MCF 10A (cell line): ENCODE measurements at regions of chr11 and their contacts with region 1.

Region 1: DNA sequence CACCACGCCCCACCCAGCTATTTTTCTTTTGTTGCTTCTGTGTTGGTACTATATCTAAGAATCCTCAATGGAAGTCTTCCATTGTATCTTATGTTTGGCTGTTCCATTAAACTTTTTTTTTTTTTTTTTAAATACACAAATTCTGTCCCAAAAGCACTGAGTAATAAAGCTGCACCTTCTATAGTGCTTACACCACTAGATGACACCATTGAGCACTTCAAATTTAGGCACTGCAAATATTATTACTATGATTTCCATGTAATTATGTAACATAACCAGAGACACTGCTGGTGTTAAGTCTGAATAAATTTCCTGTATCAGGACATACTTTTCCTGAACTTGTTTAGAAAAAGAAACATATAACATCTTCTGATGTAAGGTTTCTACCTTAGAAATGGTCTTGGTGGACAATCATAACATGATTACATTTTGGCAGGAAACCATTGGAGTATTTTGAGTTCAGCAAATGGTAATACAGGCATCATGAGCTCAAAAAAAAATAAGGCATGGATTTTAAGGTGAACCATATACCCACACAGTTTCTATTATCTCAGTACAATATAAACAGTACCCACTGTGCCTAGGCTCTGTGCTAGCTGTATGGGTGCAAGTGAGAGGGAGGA is 110.5 kb downstream of the ATG16L2 start:
- DNase-seq: peak; percentile 44
- H3K4me3 Mint-ChIP-seq: no peak overlapping the region
- H3K27ac Mint-ChIP-seq: no peak overlapping the region
- H3K4me1 Mint-ChIP-seq: no peaks in the 10 kb centered on the region
- H3K27me3 Mint-ChIP-seq: no peaks in the 10 kb centered on the region
- CTCF ChIP-seq: peak; percentile 55

Region 2: DNA sequence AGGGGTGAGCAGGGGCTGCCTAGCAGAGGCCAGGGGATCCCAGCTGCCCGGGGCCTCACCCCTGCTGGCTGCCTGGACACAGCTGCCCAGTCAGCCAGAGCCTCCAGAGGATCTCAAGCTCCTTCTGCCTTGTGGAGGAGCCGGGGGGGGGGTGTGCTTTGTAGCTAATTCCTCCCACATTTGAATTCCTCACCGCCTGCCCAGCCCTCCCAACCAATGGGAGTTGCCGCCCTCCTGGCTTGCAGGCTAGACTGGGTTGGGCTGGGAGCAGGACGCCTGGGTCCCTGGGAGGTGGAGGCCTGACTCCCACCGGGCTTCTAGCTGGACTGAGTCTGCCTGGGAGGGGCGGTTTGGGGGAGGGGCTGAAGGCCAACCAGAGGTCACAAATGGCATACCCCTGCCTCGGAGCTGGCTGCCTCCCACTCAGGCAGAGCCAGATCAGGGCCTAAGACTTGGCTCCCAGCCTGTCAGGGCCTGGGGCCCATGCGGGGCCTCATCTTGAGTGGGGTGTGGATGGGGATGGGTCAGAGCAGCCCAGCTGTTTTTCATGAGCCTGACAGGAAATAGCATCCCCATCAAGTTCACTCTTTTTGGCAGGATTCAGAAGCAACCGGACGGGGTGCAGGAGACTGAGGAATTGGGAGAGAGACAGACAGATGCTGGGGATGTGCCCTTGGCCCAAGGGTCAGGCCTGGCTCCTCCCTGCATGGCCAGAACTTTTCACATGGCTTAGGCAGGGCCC is 221.2 kb before region 1 on chr11:
- CTCF ChIA-PET with region 1: no interaction called
- POLR2A ChIA-PET with region 1: no interaction called
- intact Hi-C with region 1: no loop called
- DNase-seq: no peak
- H3K4me3 Mint-ChIP-seq: no peak overlapping the region
- H3K27ac Mint-ChIP-seq: no peak overlapping the region
- H3K4me1 Mint-ChIP-seq: no peaks in the 10 kb centered on the region
- H3K27me3 Mint-ChIP-seq: no peaks in the 10 kb centered on the region
- CTCF ChIP-seq: no peak

Region 3: DNA sequence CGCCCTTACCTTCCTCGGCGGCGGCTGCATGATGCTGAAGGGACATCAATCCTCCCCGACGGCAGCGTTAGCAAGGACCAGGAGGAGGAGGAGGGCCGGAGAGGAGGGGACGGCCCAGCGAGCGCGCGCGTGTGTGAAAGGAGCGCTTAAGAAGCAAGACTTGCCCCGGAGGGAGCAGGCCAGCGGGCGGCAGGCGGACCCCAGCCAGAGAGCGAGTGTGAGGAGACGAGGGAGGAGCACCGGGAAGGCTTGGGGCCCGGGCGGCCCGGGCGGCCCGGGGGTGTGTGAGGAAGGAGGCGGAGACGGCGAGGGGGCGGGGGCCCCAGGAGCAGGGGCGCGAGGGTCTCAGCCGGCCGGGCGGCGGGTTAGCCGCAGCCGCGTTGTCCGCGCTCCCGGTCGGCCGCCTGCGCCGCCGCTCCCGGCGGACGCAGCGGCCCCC is 217.2 kb after region 1 on chr11:
- CTCF ChIA-PET with region 1: interaction called, 3 read pairs
- POLR2A ChIA-PET with region 1: interaction called, 5 read pairs
- intact Hi-C with region 1: loop called (anchors 1 kb)
- DNase-seq: peak; percentile 58
- H3K4me3 Mint-ChIP-seq: peak overlapping the region; percentile 99
- H3K27ac Mint-ChIP-seq: peak overlapping the region; percentile 75
- H3K4me1 Mint-ChIP-seq: peaks cover 7% of the 10 kb centered on the region
- H3K27me3 Mint-ChIP-seq: no peaks in the 10 kb centered on the region
- CTCF ChIP-seq: no peak

Region 4: GRCh38 chr11:73151416-73151815 is 226.7 kb after region 1 on chr11:
- CTCF ChIA-PET with region 1: interaction called, 10 read pairs
- POLR2A ChIA-PET with region 1: no interaction called
- intact Hi-C with region 1: no loop called
- DNase-seq: no peak
- H3K4me3 Mint-ChIP-seq: no peak overlapping the region
- H3K27ac Mint-ChIP-seq: no peak overlapping the region
- H3K4me1 Mint-ChIP-seq: peaks cover 8% of the 10 kb centered on the region
- H3K27me3 Mint-ChIP-seq: no peaks in the 10 kb centered on the region
- CTCF ChIP-seq: no peak

Region 5: GRCh38 chr11:73164803-73165540 is 240.3 kb after region 1 on chr11:
- CTCF ChIA-PET with region 1: interaction called, 10 read pairs
- POLR2A ChIA-PET with region 1: interaction called, 3 read pairs
- intact Hi-C with region 1: no loop called
- DNase-seq: no peak
- H3K4me3 Mint-ChIP-seq: no peak overlapping the region
- H3K27ac Mint-ChIP-seq: no peak overlapping the region
- H3K4me1 Mint-ChIP-seq: no peaks in the 10 kb centered on the region
- H3K27me3 Mint-ChIP-seq: no peaks in the 10 kb centered on the region
- CTCF ChIP-seq: no peak

Region 6: GRCh38 chr11:73242251-73243079 is 317.8 kb after region 1 on chr11:
- CTCF ChIA-PET with region 1: interaction called, 8 read pairs
- POLR2A ChIA-PET with region 1: no interaction called
- intact Hi-C with region 1: loop called (anchors 5 kb)
- DNase-seq: peak; percentile 70
- H3K4me3 Mint-ChIP-seq: no peak overlapping the region
- H3K27ac Mint-ChIP-seq: no peak overlapping the region
- H3K4me1 Mint-ChIP-seq: peaks cover 12% of the 10 kb centered on the region
- H3K27me3 Mint-ChIP-seq: peaks cover 12% of the 10 kb centered on the region
- CTCF ChIP-seq: peak; percentile 98